ENCODE measurements at regions of chr19 and their contacts with region 1.

Region 1: GRCh38 chr19:57410877-57411671 is at the start of gene ZNF17:
- DNase-seq: peak; percentile 95
- H3K4me3 Mint-ChIP-seq: peak within 1 kb of the TSS; percentile 92
- H3K27ac Mint-ChIP-seq: peak within 1 kb of the TSS; percentile 66
- H3K4me1 Mint-ChIP-seq: peaks cover 14% of the 10 kb centered on the region
- H3K27me3 Mint-ChIP-seq: no peaks in the 10 kb centered on the region
- total RNA-seq, gene ZNF17: 4.2 to 5.0 TPM

Region 2: DNA sequence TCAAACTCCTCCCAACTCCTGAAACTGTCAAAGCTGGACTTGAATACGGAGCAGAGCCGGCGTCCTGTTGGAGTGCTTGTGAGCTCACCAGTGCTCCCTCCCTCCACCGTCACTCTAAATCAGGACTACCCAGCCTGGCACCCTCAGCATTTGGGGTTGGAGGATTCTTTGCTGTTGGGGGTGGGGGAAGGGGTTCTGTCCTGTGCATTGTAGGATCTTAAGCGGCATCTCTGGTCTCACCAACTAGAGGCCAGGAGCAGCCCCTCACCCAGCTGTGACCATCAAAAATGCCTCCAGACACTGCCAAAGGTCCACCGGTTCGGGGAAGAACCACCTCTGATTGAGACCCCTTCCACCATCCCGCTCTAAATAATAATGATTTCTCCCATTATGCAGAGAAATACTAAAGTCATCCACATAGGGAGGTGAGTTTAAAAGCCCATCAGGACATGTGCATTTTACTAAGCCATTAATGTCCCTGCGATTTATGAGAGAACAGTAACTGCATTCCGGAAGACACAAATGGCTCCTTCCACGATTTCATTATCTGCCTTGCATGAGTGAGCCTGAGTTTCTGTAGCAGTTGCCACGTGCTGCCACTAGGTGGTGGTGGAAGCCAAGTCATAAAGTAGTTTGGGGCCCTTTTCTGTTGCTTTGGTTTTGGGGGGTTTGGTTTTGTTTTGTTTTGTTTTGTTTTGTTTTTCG is 307.3 kb before region 1 on chr19:
- CTCF ChIA-PET with region 1: no interaction called
- POLR2A ChIA-PET with region 1: no interaction called
- intact Hi-C with region 1: loop called (anchors 10 kb)
- DNase-seq: peak; percentile 67
- H3K4me3 Mint-ChIP-seq: no peak overlapping the region
- H3K27ac Mint-ChIP-seq: no peak overlapping the region
- H3K4me1 Mint-ChIP-seq: no peaks in the 10 kb centered on the region
- H3K27me3 Mint-ChIP-seq: peaks cover 2% of the 10 kb centered on the region

Region 3: GRCh38 chr19:57682226-57682766 is 271.2 kb after region 1 on chr19:
- CTCF ChIA-PET with region 1: no interaction called
- POLR2A ChIA-PET with region 1: no interaction called
- intact Hi-C with region 1: loop called (anchors 2 kb)
- DNase-seq: no peak
- H3K4me3 Mint-ChIP-seq: peak overlapping the region; percentile 92
- H3K27ac Mint-ChIP-seq: peak overlapping the region; percentile 80
- H3K4me1 Mint-ChIP-seq: peaks cover 28% of the 10 kb centered on the region
- H3K27me3 Mint-ChIP-seq: no peaks in the 10 kb centered on the region